Activated CD8-positive, alpha-beta memory T cell treated with anti-CD3 and anti-CD28 coated beads, Interleukin-2, amount 10 ng/mL, durations not matched to agents 7 days and 5 days (primary cell): ENCODE measurements at regions of chr14 and their contacts with region 1.

Region 1: GRCh38 chr14:100383727-100384158 is 60.6 kb downstream of the SLC25A47 start:
- DNase-seq: peak; percentile 77
- ATAC-seq: peak; percentile 88
- H3K4me3 Mint-ChIP-seq: no peak overlapping the region
- H3K27ac Mint-ChIP-seq: no peak overlapping the region
- H3K4me1 Mint-ChIP-seq: peaks cover 6% of the 10 kb centered on the region
- H3K27me3 Mint-ChIP-seq: no peaks in the 10 kb centered on the region

Region 2: GRCh38 chr14:100173353-100173752 is 210.4 kb before region 1 on chr14:
- CTCF ChIA-PET with region 1: no interaction called
- DNase-seq: no peak
- ATAC-seq: no peak
- H3K4me3 Mint-ChIP-seq: no peak overlapping the region
- H3K27ac Mint-ChIP-seq: no peak overlapping the region
- H3K4me1 Mint-ChIP-seq: peaks cover 2% of the 10 kb centered on the region
- H3K27me3 Mint-ChIP-seq: peaks cover 11% of the 10 kb centered on the region

Region 3: DNA sequence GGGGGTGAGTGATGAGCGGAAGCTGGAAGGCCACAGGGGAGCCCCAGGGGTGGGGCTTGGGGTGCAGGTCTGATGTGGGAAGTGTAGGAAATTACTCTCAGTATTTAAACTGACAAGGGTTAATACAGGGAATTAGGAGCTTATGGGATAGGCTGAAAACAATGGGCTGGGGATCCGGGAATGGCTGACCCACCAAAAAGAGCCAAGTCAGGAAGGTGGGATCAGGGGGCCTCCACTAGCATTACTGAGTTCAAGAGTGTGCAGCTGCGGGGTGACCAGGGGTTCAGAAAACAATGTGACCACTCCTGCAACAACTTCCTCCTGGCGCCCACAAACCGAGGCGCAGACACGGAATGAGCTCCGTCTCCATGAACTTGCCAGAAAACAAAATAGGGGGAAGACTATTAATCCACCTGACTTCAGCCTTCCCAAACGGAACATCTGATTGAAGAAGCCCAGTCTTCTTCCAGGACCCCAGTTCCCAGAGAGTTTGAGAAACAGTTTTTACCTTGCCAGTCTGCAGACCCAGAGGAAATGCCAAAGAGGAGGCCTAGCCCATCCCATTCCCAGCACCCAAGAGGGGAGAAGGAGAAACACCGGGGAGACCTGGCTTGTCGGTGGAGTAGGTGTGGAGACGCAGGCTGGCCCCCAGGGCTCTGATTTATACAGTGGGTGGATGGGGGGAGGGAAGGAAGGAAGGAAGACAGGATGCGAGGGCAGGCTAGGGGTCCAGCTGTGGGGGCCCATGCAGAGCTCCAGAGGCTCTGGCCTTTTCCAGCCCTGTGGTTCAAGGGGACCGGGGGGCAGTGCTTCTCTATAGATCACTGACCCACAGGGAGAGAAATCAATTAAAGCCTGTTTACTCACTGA is 161.3 kb before region 1 on chr14:
- CTCF ChIA-PET with region 1: no interaction called
- DNase-seq: peak; percentile 67
- ATAC-seq: peak; percentile 22
- H3K4me3 Mint-ChIP-seq: no peak overlapping the region
- H3K27ac Mint-ChIP-seq: no peak overlapping the region
- H3K4me1 Mint-ChIP-seq: peaks cover 33% of the 10 kb centered on the region
- H3K27me3 Mint-ChIP-seq: no peaks in the 10 kb centered on the region

Region 4: GRCh38 chr14:100393906-100394732 is 10.4 kb after region 1 on chr14:
- CTCF ChIA-PET with region 1: interaction called, 30 read pairs
- DNase-seq: no peak
- ATAC-seq: no peak
- H3K4me3 Mint-ChIP-seq: no peak overlapping the region
- H3K27ac Mint-ChIP-seq: no peak overlapping the region
- H3K4me1 Mint-ChIP-seq: no peaks in the 10 kb centered on the region
- H3K27me3 Mint-ChIP-seq: no peaks in the 10 kb centered on the region

Region 5: GRCh38 chr14:100406505-100407131 is 22.9 kb after region 1 on chr14:
- CTCF ChIA-PET with region 1: interaction called, 36 read pairs
- DNase-seq: peak; percentile 74
- ATAC-seq: peak; percentile 90
- H3K4me3 Mint-ChIP-seq: no peak overlapping the region
- H3K27ac Mint-ChIP-seq: peak overlapping the region; percentile 79
- H3K4me1 Mint-ChIP-seq: peaks cover 47% of the 10 kb centered on the region
- H3K27me3 Mint-ChIP-seq: no peaks in the 10 kb centered on the region

Region 6: DNA sequence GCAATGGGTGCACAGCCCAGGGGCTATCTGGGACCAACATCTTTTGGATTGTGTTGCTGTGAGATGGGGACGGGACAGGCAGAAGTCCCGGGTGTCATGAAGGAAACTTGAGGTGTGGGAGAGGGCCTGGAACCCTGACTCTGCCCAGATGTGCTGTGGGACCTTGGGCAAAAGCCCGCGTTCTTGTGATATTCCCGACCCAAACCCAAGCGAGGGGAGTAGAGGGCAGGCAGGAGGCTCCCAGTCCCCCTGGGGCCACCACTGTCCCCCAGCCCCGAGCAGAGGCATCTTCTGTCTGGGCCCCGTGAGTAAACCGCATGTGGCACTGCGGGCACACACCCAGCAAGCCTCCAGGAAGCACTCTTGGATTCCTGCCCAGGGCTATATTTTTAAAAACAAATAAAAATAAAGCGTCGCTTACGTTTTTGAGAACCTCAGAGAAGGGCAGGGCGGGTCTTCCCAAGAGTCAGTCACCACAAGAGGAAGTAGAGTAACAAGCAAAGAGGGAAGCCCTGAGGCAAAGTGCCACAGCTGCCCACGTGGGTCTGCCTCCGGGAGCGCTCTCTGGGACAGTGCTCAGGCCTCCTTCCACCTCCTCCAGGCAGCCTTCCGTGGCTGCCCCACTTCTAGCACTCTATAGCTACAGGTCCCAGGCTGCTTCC is 164.0 kb after region 1 on chr14:
- CTCF ChIA-PET with region 1: interaction called, 13 read pairs
- DNase-seq: peak; percentile 64
- ATAC-seq: peak; percentile 22
- H3K4me3 Mint-ChIP-seq: peak overlapping the region; percentile 20
- H3K27ac Mint-ChIP-seq: peak overlapping the region; percentile 84
- H3K4me1 Mint-ChIP-seq: peaks cover 35% of the 10 kb centered on the region
- H3K27me3 Mint-ChIP-seq: no peaks in the 10 kb centered on the region

Region 7: DNA sequence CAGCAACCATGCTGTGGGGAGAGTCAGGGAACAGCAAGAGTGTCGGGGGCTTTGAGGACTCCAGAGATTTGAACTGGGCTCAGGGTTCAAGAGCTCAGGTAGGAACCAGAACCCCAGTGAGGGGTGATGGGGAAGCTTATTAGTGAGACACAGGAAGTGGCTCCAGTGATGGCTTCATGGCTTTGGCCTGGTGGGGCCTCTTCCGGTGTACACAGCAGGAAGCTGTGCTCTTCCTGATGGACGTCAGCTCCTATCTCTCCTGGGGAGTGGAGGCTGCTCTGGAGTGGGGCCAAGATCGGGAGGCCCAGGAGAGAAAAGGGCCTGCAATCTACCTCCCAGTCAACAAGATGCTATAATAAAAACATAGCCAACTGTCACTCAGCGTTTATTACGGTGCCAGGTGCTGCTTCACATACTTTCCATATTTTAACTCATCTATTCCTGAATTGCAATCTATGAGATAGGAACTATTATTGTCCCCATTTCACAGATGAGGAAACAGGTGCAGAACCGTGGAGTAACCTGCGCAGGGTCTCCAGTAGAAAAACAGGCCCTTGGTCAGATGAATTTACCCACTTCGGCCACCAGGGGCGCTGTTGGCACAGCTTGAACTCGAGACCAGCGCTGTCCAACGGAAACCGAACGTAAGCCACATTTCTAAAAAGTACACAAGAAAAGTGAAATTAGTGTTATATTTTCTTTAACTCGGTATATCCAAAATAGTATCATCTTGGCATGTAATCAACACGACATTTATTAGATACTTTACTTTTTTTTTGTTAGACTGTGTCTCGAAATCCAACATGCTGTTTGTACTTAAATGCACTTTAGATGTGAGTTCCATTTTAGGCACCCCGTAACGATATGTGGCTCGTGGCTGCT is 279.4 kb after region 1 on chr14:
- CTCF ChIA-PET with region 1: interaction called, 15 read pairs
- DNase-seq: peak; percentile 71
- ATAC-seq: peak; percentile 66
- H3K4me3 Mint-ChIP-seq: no peak overlapping the region
- H3K27ac Mint-ChIP-seq: peak overlapping the region; percentile 30
- H3K4me1 Mint-ChIP-seq: peaks cover 6% of the 10 kb centered on the region
- H3K27me3 Mint-ChIP-seq: peaks cover 4% of the 10 kb centered on the region